ENCODE measurements at regions of chr5 and their contacts with region 1.

Region 1: GRCh38 chr5:110757118-110757729 is 18.4 kb downstream of the SLC25A46 start:
- DNase-seq: peak; percentile 38
- H3K4me3 Mint-ChIP-seq: no peak overlapping the region
- H3K27ac Mint-ChIP-seq: no peak overlapping the region
- H3K4me1 Mint-ChIP-seq: peaks cover 26% of the 10 kb centered on the region
- H3K27me3 Mint-ChIP-seq: no peaks in the 10 kb centered on the region

Region 2: GRCh38 chr5:111063700-111064322 is 306.6 kb after region 1 on chr5:
- CTCF ChIA-PET with region 1: no interaction called
- intact Hi-C with region 1: loop called (anchors 1 kb)
- DNase-seq: no peak
- H3K4me3 Mint-ChIP-seq: no peak overlapping the region
- H3K27ac Mint-ChIP-seq: no peak overlapping the region
- H3K4me1 Mint-ChIP-seq: no peaks in the 10 kb centered on the region
- H3K27me3 Mint-ChIP-seq: peaks cover 31% of the 10 kb centered on the region

Region 3: GRCh38 chr5:111129938-111130337 is 372.7 kb after region 1 on chr5:
- CTCF ChIA-PET with region 1: no interaction called
- intact Hi-C with region 1: loop called (anchors 10 kb)
- DNase-seq: no peak
- H3K4me3 Mint-ChIP-seq: no peak overlapping the region
- H3K27ac Mint-ChIP-seq: no peak overlapping the region
- H3K4me1 Mint-ChIP-seq: peaks cover 15% of the 10 kb centered on the region
- H3K27me3 Mint-ChIP-seq: no peaks in the 10 kb centered on the region

Region 4: DNA sequence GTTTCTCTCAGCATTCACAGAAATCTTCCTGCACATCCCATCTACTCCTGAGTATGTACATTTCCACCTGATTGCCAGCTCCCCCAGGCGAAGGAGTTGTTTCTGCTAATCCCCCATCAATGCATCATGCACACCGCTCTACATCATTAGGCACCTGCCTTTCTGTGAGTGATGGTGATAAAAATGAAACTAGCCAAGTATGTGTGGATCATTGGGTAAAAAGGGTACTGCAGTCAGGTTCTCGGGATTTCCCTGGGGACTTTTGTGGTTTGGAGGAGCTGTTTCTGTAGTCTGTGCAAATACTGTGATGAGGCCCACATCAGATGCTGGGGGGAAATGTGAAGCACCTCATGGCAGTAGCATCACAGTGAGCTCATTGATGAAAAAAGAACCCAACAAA is 497.4 kb after region 1 on chr5:
- CTCF ChIA-PET with region 1: no interaction called
- intact Hi-C with region 1: no loop called
- DNase-seq: peak; percentile 95
- H3K4me3 Mint-ChIP-seq: peak overlapping the region; percentile 46
- H3K27ac Mint-ChIP-seq: peak overlapping the region; percentile 90
- H3K4me1 Mint-ChIP-seq: peaks cover 78% of the 10 kb centered on the region
- H3K27me3 Mint-ChIP-seq: no peaks in the 10 kb centered on the region

Region 5: GRCh38 chr5:111478266-111478665 is 721.0 kb after region 1 on chr5:
- CTCF ChIA-PET with region 1: no interaction called
- intact Hi-C with region 1: loop called (anchors 2 kb)
- DNase-seq: no peak
- H3K4me3 Mint-ChIP-seq: no peak overlapping the region
- H3K27ac Mint-ChIP-seq: no peak overlapping the region
- H3K4me1 Mint-ChIP-seq: no peaks in the 10 kb centered on the region
- H3K27me3 Mint-ChIP-seq: no peaks in the 10 kb centered on the region

Region 6: GRCh38 chr5:112146323-112147226 is 1389.4 kb after region 1 on chr5:
- CTCF ChIA-PET with region 1: no interaction called
- intact Hi-C with region 1: loop called (anchors 1 kb)
- DNase-seq: peak; percentile 81
- H3K4me3 Mint-ChIP-seq: no peak overlapping the region
- H3K27ac Mint-ChIP-seq: no peak overlapping the region
- H3K4me1 Mint-ChIP-seq: no peaks in the 10 kb centered on the region
- H3K27me3 Mint-ChIP-seq: peaks cover 3% of the 10 kb centered on the region